Stomach (tissue), 19 donors: ENCODE measurements at regions of chr6 and their contacts with region 1.

Region 1: GRCh38 chr6:155181498-155181897 is 82.3 kb upstream of the CLDN20 start:
- DNase-seq: no peak
- H3K4me3 ChIP-seq: no peak overlapping the region
- H3K27ac ChIP-seq: no peak overlapping the region
- H3K4me1 ChIP-seq: peaks cover 0 to 9% (median 4%) of the 10 kb centered on the region in 4 donors
- H3K27me3 ChIP-seq: no peaks in the 10 kb centered on the region
- CTCF ChIP-seq: no peak
- EP300 ChIP-seq: no peak
- POLR2A ChIP-seq: no peak

Region 2: GRCh38 chr6:154921482-154921881 is 260.0 kb before region 1 on chr6:
- intact Hi-C with region 1: loop called (anchors 5 kb)
- DNase-seq: no peak
- H3K4me3 ChIP-seq: no peak overlapping the region
- H3K27ac ChIP-seq: no peak overlapping the region
- H3K4me1 ChIP-seq: no peaks in the 10 kb centered on the region
- H3K27me3 ChIP-seq: no peaks in the 10 kb centered on the region
- CTCF ChIP-seq: no peak
- EP300 ChIP-seq: no peak
- POLR2A ChIP-seq: no peak